Activated CD8-positive, alpha-beta T cell treated with anti-CD3 and anti-CD28 coated beads for 36 hours (primary cell): ENCODE measurements at regions of chr11 and their contacts with region 1.

Region 1: DNA sequence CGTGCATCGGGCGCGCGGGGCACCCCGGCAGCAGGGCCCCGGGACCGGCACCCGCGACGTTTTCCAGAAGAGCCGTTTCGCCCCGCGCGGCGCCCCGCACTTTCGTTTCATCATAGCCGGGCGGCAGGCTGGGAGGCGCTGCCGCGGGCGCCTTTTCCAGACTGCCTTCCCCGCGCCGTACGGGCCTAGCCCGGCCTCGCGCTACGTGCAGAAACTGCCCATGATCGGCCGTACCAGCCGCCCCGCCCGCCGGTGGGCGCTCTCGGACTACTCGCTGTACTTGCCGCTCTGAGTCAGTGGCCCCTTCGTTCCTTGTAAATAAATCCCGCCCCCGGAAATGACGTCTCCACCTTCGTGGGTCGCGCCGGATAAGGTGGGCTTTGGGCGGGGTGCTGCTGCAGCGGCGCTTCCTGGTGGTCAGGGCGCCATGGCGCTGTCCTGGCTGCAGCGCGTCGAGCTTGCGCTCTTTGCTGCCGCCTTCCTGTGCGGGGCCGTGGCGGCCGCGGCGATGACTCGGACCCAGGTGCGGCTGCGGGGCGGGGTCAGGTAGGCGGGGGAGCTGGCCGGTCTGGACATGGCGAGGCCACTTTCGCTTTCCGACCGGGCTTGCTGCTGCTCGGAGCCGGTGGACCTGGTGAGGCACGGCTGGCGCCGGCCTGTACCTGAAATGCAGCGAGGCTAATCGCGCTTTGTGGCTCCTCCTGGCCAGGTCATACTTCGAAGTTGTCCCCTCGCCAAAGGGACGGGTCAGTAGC is at the start of gene TMEM179B:
- DNase-seq: peak; percentile 100
- ATAC-seq: peak; percentile 75
- H3K4me3 Mint-ChIP-seq: peak within 1 kb of the TSS; percentile 95
- H3K27ac Mint-ChIP-seq: peak within 1 kb of the TSS; percentile 95
- H3K4me1 Mint-ChIP-seq: peaks cover 41% of the 10 kb centered on the region
- H3K27me3 Mint-ChIP-seq: no peaks in the 10 kb centered on the region
- CTCF ChIP-seq: peak; percentile 69
- total RNA-seq, gene TMEM179B: 18.6 to 19.5 TPM

Region 2: GRCh38 chr11:62705880-62706849 is 81.0 kb before region 1 on chr11:
- CTCF ChIA-PET with region 1: interaction called, 10 read pairs
- POLR2A ChIA-PET with region 1: interaction called, 4 read pairs
- intact Hi-C with region 1: no loop called
- DNase-seq: peak; percentile 97
- ATAC-seq: peak; percentile 77
- H3K4me3 Mint-ChIP-seq: peak overlapping the region; percentile 84
- H3K27ac Mint-ChIP-seq: peak overlapping the region; percentile 77
- H3K4me1 Mint-ChIP-seq: peaks cover 43% of the 10 kb centered on the region
- H3K27me3 Mint-ChIP-seq: no peaks in the 10 kb centered on the region
- CTCF ChIP-seq: no peak

Region 3: GRCh38 chr11:62753736-62754603 is 33.2 kb before region 1 on chr11 and contains the start of gene ZBTB3:
- CTCF ChIA-PET with region 1: interaction called, 13 read pairs
- POLR2A ChIA-PET with region 1: interaction called, 11 read pairs
- intact Hi-C with region 1: no loop called
- DNase-seq: peak; percentile 99
- ATAC-seq: peak; percentile 97
- H3K4me3 Mint-ChIP-seq: peak within 1 kb of the TSS; percentile 99
- H3K27ac Mint-ChIP-seq: peak within 1 kb of the TSS; percentile 99
- H3K4me1 Mint-ChIP-seq: peaks cover 26% of the 10 kb centered on the region
- H3K27me3 Mint-ChIP-seq: no peaks in the 10 kb centered on the region
- CTCF ChIP-seq: no peak
- total RNA-seq, gene ZBTB3: 9.8 to 11.8 TPM

Region 4: DNA sequence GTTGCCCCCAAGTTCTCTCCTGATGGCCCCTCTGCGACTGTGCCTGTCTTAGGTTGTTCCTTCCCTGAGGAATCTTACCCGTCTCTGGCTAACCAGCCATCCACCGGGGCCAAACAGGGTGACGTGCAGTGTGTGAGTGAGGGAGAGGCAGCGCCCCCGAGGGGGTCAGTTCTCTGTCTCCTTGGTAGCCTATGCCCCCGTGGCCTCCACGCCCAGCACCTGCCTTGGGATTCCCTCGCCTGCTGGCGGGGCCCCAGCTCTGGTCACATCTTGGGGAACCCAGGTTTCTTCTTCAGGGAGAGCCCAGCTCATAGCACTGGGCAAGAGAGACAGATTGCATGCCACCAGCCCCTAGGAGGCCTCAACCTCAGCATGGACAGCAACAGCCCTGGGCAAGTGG is 12.3 kb after region 1 on chr11:
- CTCF ChIA-PET with region 1: interaction called, 21 read pairs
- POLR2A ChIA-PET with region 1: interaction called, 228 read pairs
- intact Hi-C with region 1: no loop called
- DNase-seq: no peak
- ATAC-seq: no peak
- H3K4me3 Mint-ChIP-seq: no peak overlapping the region
- H3K27ac Mint-ChIP-seq: peak overlapping the region; percentile 34
- H3K4me1 Mint-ChIP-seq: peaks cover 36% of the 10 kb centered on the region
- H3K27me3 Mint-ChIP-seq: no peaks in the 10 kb centered on the region
- CTCF ChIP-seq: no peak

Region 5: DNA sequence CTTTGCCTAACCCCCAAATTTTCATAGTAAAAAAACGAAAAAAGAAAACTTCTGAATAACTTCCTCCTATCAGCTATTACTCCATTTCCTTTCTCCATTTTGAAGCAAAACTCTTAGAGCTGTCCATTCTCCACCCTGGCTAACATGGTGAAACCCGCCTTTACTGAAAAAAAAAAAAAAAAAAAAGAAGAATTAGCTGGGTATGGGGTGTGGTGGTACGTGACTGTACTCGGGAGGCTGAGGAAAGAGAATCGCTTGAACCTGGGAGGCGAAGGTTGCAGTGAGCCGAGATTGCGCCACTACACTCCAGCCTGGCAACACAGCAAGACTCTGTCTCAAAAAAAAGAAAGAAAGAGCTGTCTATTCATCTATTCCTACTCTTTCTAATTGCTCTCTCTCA is 29.4 kb after region 1 on chr11:
- CTCF ChIA-PET with region 1: interaction called, 13 read pairs
- POLR2A ChIA-PET with region 1: interaction called, 5 read pairs
- intact Hi-C with region 1: no loop called
- DNase-seq: no peak
- ATAC-seq: no peak
- H3K4me3 Mint-ChIP-seq: no peak overlapping the region
- H3K27ac Mint-ChIP-seq: no peak overlapping the region
- H3K4me1 Mint-ChIP-seq: peaks cover 2% of the 10 kb centered on the region
- H3K27me3 Mint-ChIP-seq: no peaks in the 10 kb centered on the region
- CTCF ChIP-seq: no peak

Region 6: DNA sequence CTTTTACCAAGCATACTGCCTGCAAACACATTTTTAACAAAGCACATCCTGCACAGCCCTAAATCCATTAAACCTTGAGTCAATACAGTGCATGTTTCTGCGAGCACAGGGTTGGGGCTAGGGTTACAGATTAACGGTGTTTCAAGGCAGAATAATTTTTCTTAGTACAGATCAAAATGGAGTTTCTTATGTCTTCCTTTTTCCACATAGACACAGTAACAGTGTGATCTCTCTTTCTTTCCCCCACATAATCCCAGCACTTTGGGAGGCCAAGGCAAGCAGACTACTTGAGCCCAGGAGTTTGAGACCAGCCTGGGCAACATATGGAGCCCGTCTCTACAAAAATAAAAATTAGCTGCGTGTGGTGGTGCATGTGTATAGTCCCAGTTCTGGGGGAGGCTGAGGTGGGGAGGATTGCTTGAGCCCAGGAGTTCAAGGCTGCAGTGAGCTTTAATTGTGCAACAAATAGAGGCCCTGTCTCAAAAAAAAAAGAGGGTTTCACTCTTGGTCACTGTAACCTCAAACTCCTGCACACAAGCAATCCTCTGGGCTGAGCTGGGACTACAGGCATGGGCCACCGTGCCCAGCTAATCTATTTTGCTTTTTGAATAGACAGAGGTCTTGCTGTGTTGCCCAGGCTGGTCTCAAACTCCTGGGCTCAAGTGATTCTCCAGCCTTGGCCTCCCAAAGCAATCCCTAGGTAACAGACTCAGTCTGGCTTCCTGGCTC is 73.8 kb after region 1 on chr11:
- CTCF ChIA-PET with region 1: interaction called, 47 read pairs
- POLR2A ChIA-PET with region 1: interaction called, 183 read pairs
- intact Hi-C with region 1: loop called (anchors 1 kb)
- DNase-seq: no peak
- ATAC-seq: no peak
- H3K4me3 Mint-ChIP-seq: no peak overlapping the region
- H3K27ac Mint-ChIP-seq: peak overlapping the region; percentile 61
- H3K4me1 Mint-ChIP-seq: peaks cover 41% of the 10 kb centered on the region
- H3K27me3 Mint-ChIP-seq: no peaks in the 10 kb centered on the region
- CTCF ChIP-seq: no peak